ENCODE measurements at regions of chr11 and their contacts with region 1.

Region 1: DNA sequence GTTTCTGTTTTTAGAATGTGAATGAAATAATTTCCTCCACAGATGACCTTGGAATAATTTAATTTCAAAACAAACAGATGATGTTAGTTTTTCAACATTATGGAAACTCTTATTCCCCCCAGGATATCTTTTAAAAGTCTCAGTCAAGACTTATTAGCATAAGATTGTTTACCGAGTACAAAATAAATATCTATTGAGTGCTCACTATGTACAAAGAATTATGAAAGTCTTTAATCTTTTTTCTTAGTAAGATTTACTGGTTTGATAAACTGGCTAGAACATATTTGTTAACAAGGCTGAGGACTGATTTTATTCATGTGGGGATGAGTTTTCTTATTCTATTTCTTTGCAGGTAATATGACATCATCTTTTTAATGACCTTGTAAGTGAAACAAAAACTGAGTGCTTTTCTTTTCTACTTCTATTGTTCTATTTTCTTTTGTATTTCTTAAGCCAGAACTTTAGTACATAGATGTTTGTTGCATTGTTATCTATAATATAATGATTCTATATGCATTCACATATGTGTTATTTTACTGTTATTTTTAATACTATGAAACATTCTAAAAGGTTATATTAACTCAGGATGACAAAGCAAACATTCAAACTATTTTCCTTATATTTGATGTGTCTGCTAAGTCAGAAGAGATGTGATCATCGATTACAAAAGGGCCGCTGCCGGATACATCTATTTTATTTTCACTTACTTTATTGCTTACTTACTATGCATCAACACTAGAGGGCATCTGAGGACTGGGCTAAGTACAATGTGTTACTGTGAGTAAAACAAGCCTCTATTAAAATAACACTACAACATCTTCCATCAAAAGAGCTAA is 111.0 kb upstream of the ARHGAP42 start:
- DNase-seq: peak in 1 of 10 donors; percentile 7
- H3K4me3 ChIP-seq: peak overlapping the region in 35 of 59 donors; percentile 1 to 57 (median 27)
- H3K27ac ChIP-seq: peak overlapping the region in 1 of 59 donors; percentile 1
- H3K27me3 ChIP-seq: no peaks in the 10 kb centered on the region
- CTCF ChIP-seq: peak; percentile 65 to 95 (median 84)

Region 2: GRCh38 chr11:99795999-99796398 is 780.1 kb before region 1 on chr11:
- intact Hi-C with region 1: no loop called
- DNase-seq: no peak
- H3K4me3 ChIP-seq: no peak overlapping the region
- H3K27ac ChIP-seq: no peak overlapping the region
- H3K27me3 ChIP-seq: no peaks in the 10 kb centered on the region
- CTCF ChIP-seq: no peak

Region 3: DNA sequence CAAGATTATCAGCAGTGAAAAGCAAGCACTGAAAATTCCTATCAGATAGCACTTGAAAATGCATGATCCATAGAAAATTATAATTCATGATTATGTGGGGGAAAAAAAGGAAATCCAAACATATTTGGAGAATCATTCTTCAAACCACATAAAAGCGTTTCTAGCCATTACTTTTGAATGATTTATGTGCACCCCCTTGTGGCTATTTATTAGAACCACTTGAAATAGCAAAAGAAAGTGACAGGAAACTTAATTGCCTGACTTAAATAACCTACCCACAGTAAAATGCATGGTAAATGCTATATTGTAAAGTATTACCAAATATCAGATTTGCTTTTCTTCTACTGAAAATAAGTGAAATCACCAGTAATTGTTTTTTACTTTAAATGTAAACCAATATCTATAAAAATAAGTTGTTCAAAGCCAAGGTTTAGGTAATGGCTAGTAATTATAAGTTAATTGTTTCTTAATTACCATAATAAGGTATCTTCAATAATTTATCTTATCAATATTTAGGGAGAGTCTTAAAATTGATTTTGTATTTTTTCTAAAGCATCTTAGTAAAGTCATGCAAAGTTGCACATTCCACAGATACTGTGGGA is 279.5 kb after region 1 on chr11:
- intact Hi-C with region 1: loop called (anchors 2 to 5 kb)
- DNase-seq: no peak
- H3K4me3 ChIP-seq: no peak overlapping the region
- H3K27ac ChIP-seq: no peak overlapping the region
- H3K27me3 ChIP-seq: no peaks in the 10 kb centered on the region
- CTCF ChIP-seq: peak; percentile 60 to 91 (median 76)

Region 4: GRCh38 chr11:100861223-100861622 is 285.1 kb after region 1 on chr11:
- intact Hi-C with region 1: loop called in 1 of 2 experiments (anchors 2 kb)
- DNase-seq: no peak
- H3K4me3 ChIP-seq: no peak overlapping the region
- H3K27ac ChIP-seq: no peak overlapping the region
- H3K27me3 ChIP-seq: no peaks in the 10 kb centered on the region
- CTCF ChIP-seq: no peak

Region 5: DNA sequence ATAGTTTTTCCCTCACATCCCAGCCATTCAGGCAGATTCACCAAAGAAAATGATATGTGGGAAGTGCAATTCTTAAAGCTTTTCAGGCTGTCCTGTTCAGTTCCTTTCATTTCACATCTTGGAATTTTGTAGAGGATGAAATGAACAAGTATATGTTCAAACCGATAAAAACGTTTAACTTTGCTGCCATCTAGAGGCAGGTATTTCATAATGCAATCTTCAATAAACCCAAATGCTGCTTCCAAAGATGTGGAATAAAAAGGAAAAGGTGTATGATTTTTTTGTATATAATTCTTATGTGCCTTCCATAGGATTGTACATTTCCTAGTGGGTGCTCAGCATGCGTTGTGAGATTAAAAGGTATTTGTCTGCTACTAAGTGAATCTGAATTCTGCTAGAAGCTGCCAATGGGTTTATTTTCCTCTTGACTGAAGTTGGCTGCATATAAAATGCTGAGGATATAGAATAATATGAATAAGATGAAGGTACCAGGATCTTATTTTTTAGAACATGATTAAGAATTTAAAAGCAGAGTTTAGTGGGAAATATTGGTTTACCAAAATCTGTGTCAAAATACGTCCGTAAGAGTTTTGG is 354.2 kb after region 1 on chr11:
- intact Hi-C with region 1: loop called (anchors 5 kb)
- DNase-seq: no peak
- H3K4me3 ChIP-seq: no peak overlapping the region
- H3K27ac ChIP-seq: no peak overlapping the region
- H3K27me3 ChIP-seq: no peaks in the 10 kb centered on the region
- CTCF ChIP-seq: peak; percentile 51 to 91 (median 78)